H1 (cell line): ENCODE measurements at regions of chr9 and their contacts with region 1.

Region 1: GRCh38 chr9:98034593-98035546 is 21.7 kb upstream of the NANS start:
- DNase-seq: peak; percentile 36 to 95
- H3K4me3 ChIP-seq: no peak overlapping the region
- H3K27ac ChIP-seq: no peak overlapping the region
- H3K4me1 ChIP-seq: no peaks in the 10 kb centered on the region
- H3K27me3 ChIP-seq: peaks cover 0 to 3% (median 0%) of the 10 kb centered on the region in 4 experiments; a peak in 2 of 7 replicates
- CTCF ChIP-seq: peak; percentile 68 to 90 (median 86)
- EP300 ChIP-seq: no peak
- POLR2A ChIP-seq: no peak
- RAD21 ChIP-seq: peak; percentile 46 to 61

Region 2: DNA sequence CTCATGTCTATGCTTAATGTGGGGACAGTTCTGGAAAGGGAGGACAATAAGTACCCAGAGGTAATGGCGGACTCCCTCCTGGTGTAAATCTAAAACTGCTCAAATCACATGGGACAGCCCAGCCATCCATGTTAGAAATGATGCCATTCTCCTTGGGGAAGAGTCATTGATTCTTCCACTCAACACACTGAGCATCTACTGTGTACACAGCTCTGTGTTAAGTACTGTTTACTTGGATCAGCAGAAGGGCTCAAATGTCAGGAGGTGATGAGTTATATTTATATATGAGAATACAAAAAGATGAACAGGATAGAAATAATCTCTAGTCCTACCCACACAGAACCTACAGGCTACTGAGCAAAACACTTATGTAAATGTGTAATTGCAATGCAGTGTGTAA is 10.2 kb before region 1 on chr9:
- CTCF ChIA-PET with region 1: interaction called, 27 read pairs
- POLR2A ChIA-PET with region 1: interaction called, 3 read pairs
- DNase-seq: no peak
- H3K4me3 ChIP-seq: no peak overlapping the region
- H3K27ac ChIP-seq: no peak overlapping the region
- H3K4me1 ChIP-seq: no peaks in the 10 kb centered on the region
- H3K27me3 ChIP-seq: no peaks in the 10 kb centered on the region
- CTCF ChIP-seq: no peak
- EP300 ChIP-seq: no peak
- POLR2A ChIP-seq: no peak
- RAD21 ChIP-seq: no peak

Region 3: DNA sequence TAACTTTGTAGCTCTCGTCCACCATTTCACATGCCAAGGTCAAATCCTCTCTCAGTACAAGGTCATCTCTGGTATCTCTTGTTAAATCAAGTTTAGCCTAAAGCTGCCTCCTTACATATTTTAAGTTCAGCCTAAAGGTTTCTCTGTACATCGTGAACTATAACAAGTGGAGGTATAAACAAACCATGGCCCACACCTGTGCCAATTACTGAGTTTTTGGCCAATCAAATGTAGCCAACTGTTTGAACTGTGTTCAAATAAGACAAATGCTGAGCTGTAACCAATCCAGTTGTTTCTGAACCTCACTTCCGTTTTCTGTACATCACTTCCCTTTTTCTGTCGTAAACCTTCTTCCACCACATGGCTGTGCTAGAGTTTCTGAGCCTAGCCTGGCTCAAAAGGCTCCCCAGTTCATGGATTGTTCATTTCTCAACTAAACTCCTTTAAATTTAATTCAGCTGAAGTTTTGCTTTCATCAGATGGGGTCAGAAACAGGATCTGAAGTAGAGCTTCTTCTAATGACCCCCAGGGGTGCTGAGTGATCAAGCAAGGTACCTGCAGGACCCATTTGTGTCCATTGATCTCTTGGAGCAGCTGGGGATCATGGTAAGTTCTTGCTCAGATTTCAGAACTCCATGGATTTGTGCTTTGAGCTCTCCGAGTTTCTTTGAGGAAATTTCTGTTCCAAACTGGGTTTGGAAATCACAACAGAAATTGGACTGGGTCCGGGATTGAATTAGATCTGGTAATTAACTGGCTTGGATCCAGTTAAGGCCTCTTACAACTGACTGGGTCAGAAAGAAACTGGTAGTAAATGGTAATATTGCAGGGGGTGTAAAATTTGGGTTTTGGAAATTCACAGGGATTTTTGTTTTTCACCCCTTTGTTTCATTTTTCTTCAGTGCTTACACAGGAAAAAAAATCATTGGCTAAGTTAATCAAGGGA is 10.6 kb after region 1 on chr9:
- CTCF ChIA-PET with region 1: interaction called, 25 read pairs
- POLR2A ChIA-PET with region 1: no interaction called
- DNase-seq: no peak
- H3K4me3 ChIP-seq: no peak overlapping the region
- H3K27ac ChIP-seq: no peak overlapping the region
- H3K4me1 ChIP-seq: no peaks in the 10 kb centered on the region
- H3K27me3 ChIP-seq: no peaks in the 10 kb centered on the region; a peak in 2 of 7 replicates
- CTCF ChIP-seq: no peak
- EP300 ChIP-seq: no peak
- POLR2A ChIP-seq: no peak
- RAD21 ChIP-seq: no peak